B cell (primary cell): ENCODE measurements at regions of chr14 and their contacts with region 1.

Region 1: GRCh38 chr14:95943699-95944098 is 67.1 kb downstream of the TUNAR start:
- DNase-seq: no peak
- ATAC-seq: no peak
- H3K4me3 ChIP-seq: no peak overlapping the region
- H3K4me3 Mint-ChIP-seq: no peak overlapping the region
- H3K27ac ChIP-seq: no peak overlapping the region
- H3K27ac Mint-ChIP-seq: no peak overlapping the region
- H3K4me1 ChIP-seq: no peaks in the 10 kb centered on the region
- H3K4me1 Mint-ChIP-seq: no peaks in the 10 kb centered on the region
- H3K27me3 ChIP-seq: peaks cover 0 to 6% (median 0%) of the 10 kb centered on the region in 4 experiments
- H3K27me3 Mint-ChIP-seq: peaks cover 16% of the 10 kb centered on the region
- CTCF ChIP-seq: no peak

Region 2: GRCh38 chr14:95018845-95019244 is 924.9 kb before region 1 on chr14:
- CTCF ChIA-PET with region 1: no interaction called
- POLR2A ChIA-PET with region 1: no interaction called
- intact Hi-C with region 1: loop called (anchors 10 kb)
- DNase-seq: no peak
- ATAC-seq: no peak
- H3K4me3 ChIP-seq: no peak overlapping the region
- H3K4me3 Mint-ChIP-seq: no peak overlapping the region
- H3K27ac ChIP-seq: no peak overlapping the region
- H3K27ac Mint-ChIP-seq: no peak overlapping the region
- H3K4me1 ChIP-seq: no peaks in the 10 kb centered on the region
- H3K4me1 Mint-ChIP-seq: no peaks in the 10 kb centered on the region
- H3K27me3 ChIP-seq: peaks cover 0 to 4% (median 2%) of the 10 kb centered on the region in 4 experiments
- H3K27me3 Mint-ChIP-seq: peaks cover 14% of the 10 kb centered on the region
- CTCF ChIP-seq: no peak